Left colon (tissue), 2 donors: ENCODE measurements at regions of chr6 and their contacts with region 1.

Region 1: DNA sequence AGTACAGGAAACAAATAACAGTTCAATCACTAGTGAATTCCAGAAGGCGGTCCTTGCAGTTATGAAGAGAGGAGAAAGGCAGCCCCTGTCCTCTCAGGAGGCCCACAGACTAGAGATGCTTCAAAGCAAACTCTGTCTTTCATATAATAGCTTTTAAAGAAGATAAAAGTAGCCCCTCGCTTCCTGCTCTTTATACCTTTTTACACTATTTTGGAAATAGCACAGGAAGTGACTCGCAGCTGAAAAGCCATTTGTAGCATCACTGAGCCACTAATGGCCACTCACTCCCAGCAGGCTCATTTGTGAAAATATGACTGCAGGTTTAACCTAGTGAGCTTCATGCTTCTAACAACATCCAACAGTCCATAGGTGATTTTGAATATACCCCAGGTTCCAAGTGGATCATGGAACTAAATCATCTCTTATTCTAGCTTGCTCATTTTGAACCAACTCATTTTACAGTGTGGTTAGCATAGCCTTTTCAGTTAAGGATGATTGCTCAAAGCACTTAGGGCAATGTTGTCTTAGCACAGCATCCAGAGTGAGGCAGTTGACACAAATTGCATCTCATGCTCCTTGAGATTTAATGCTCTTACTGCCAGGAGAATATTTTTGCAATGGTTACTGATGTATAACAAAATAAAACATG is 136.0 kb upstream of the NRSN1 start:
- DNase-seq: no peak
- ATAC-seq: no peak

Region 2: GRCh38 chr6:25511376-25511775 is 1521.4 kb after region 1 on chr6:
- intact Hi-C with region 1: loop called in 1 of 2 experiments (anchors 10 kb)
- DNase-seq: no peak
- ATAC-seq: no peak